ENCODE measurements at regions of chr21 and their contacts with region 1.

Region 1: DNA sequence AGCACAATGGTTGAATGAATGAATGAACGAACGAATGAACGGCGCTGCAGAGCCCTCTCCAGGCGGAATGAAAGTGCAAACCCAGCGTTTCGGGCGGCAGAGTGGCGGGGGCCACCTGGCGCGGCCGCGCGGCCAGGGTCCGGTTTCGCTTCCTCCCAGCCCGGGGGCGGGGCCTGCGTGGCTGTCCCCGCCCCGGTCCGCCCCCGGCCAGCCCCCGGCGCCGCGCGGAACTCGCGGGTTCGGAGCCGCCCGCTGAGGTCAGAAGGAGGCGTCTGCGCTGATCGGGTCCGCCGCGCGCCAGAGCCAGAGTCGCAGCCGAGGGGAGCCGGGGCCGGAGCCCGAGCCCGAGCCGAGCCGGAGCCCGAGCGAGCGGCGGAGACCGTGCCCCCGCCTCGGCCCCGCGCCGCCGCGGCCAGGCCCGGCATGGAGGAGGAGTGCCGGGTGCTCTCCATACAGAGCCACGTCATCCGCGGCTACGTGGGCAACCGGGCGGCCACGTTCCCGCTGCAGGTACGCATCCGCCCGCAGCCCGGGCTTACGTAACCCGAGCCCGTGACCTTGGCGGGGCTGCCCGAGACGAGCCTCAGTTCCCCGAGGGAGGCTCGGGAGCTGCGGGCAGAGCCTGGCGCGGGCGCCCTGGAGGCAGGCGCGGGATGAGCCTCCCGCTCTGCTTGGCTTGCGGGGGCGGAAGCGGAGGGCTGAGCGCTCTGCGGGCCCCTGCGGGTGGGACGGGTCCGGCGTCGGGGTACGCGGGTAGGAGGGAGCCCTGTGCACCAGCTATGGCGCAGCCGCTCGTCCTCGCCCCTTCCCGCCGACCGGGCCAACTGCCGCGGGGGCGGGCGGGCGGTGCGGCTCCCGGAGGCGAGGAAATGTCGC is at the start of gene PDXK:
- DNase-seq: peak; percentile 94
- CTCF ChIP-seq: peak; percentile 53

Region 2: GRCh38 chr21:43667191-43667904 is 51.8 kb before region 1 on chr21:
- in situ Hi-C with region 1: loop called (anchors 10 kb)
- DNase-seq: no peak
- CTCF ChIP-seq: no peak

Region 3: GRCh38 chr21:43829575-43830119 is 110.5 kb after region 1 on chr21:
- in situ Hi-C with region 1: no loop called
- DNase-seq: no peak
- CTCF ChIP-seq: no peak

Measured in GM13976 (cell line).